ENCODE measurements at regions of chr19 and their contacts with region 1.

Region 1: DNA sequence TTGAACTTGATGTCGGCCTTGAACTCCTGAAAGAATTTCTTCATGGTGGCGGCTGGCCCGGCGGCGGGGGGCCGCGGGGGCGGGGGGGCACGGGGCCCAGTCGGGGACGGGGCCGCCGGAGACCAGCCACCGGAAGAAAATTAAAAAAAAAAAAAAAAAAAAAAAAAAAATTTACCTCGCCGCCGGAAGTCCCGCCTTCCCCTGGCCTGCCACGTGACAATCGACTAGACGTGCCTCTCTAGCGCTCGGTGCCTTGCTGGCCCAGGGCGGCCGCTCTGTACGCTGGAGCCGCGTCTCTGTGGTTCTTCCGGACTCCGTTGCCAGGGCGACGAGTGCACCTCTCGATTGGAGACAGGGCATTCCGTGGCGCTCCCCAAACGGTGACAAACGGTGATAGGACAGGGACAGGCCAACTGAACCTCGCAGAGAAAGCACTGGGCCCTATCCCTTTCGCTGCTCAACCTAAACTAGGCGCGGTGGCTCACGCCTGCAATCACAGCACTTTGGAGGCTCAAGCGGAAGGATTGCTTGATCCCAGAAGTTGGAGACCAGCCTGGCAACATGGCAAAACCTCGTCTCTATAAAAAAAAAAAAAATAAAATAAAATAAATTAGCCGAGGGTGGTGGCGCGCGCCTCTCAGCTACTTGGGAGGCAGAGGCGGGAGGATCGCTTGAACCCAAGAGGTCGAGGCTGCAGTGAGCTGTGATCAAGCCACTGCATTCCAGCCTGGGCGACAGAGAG is at the start of gene UBXN6:
- DNase-seq: peak; percentile 99
- H3K4me3 ChIP-seq: peak within 1 kb of the TSS; percentile 82 to 87
- H3K27ac ChIP-seq: peak within 1 kb of the TSS; percentile 86 to 92
- H3K4me1 ChIP-seq: peaks cover 31% of the 10 kb centered on the region
- H3K27me3 ChIP-seq: no peaks in the 10 kb centered on the region
- CTCF ChIP-seq: peak in 1 of 3 experiments; percentile 24
- POLR2A ChIP-seq: no peak
- total RNA-seq, gene UBXN6: 293 to 319 TPM

Region 2: DNA sequence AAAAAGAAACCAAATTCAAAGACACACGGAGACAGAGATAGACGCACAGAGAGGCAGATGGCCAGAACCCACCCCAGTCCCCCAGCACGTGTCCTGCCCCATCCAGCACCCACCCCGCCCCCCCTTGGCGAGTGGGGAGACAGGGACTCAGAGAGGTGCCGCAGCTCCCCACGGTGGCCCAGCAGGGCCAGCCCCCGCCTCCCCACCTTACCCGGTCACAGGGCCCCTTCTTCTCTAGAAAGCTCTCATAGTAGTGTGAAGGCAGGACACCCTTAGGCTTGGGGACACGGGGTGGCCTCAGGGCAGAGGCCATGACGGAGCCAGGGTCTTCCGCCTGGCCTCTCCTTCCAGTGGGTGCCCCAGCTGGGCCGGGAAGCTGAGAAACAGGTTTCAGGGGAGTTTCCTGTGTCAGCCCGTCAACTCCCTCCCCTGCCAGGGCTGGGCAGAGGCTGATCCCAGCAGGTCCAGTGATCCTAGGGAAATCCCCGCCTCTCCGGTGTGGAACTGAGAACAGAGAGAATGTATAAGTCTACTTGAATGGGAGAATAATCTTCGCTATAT is 119.3 kb before region 1 on chr19 and contains the start of gene STAP2:
- intact Hi-C with region 1: no loop called
- DNase-seq: peak; percentile 51
- H3K4me3 ChIP-seq: peak within 1 kb of the TSS; percentile 32 to 43
- H3K27ac ChIP-seq: peak within 1 kb of the TSS; percentile 45 to 48
- H3K4me1 ChIP-seq: peaks cover 7% of the 10 kb centered on the region
- H3K27me3 ChIP-seq: no peaks in the 10 kb centered on the region
- CTCF ChIP-seq: no peak
- POLR2A ChIP-seq: no peak
- total RNA-seq, gene STAP2: 5.3 to 6.4 TPM

Region 3: DNA sequence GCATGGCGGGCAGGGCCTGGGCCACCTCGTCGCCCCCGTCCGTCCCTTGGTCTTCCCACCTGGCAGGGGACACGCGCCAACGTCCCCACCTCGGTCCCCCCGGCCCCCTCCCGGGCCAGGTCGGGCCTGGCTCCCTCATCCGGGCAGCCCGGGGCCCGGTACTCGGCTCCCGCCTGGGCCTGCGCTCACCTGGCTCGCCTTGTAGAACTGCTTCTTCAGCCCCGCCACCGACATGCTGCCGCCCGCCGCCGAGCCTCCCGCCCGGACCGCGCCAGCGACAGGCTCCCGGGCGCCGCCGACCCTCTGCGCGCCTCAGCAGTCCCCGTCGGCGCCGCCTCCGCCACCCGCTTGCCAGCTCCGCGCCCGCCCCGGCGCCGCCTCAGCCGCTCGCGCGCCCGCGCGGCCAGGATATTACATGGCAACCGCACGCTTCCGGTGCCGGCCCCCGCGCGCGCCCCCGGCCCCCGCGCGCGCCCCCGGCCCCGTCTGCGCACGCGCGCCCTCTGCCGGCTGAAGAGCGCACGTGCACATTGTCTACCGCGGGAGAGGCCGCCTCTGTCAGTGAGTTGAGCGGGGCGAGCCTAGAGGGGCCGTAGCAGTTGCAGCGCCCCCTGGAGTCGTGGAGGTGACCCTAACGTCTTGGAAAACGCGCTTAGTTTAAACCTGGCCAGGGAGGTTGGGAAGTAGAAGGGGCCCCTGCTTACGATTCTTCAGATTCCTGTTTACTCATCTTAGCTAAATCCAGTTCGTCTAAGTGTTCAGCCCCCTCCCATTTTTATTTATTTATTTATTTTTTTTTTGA is 57.5 kb before region 1 on chr19 and contains the start of gene SH3GL1:
- intact Hi-C with region 1: loop called (anchors 10 kb)
- DNase-seq: peak; percentile 96
- H3K4me3 ChIP-seq: peak within 1 kb of the TSS; percentile 88 to 97
- H3K27ac ChIP-seq: peak within 1 kb of the TSS; percentile 88 to 93
- H3K4me1 ChIP-seq: peaks cover 32% of the 10 kb centered on the region
- H3K27me3 ChIP-seq: no peaks in the 10 kb centered on the region
- CTCF ChIP-seq: peak; percentile 89 to 99 (median 98)
- POLR2A ChIP-seq: no peak
- total RNA-seq, gene SH3GL1: 41.6 to 53.4 TPM

Region 4: DNA sequence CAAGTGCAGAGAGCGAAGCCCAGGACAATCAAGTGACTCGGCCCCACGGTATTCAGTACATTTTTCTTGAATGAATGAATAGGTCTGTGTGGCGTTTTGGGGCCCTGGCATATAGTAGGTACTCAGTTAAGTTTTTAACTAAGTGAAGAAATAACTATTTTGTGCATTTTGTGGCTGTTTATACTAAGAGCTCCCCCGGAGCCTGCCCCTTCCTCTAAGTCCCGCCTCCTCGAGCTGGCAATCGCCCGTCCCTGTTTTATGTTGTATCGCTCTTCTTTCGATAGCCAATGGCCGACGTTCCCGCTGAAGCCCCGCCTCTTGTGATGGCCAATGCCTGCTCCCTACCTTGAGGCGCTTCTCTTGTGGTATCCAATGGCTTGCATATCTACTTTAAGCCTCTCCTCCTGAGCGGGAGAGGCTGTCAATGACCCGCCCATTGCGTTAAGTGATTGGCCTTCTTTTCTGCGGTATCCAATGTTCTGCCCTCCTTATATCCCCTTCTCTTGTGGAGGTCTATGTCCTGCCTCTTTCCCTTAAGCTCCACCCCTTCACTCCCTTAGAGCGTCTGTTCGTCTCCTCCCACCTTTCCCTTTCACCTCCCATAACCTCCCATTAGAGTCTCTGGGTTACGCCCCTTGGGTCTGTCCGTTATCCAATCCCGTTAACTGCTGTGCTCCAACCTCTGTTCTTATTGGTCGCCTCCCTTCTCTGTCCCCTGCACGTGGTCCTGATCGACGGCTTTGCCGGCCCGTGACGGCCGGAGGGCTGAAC is 13.8 kb after region 1 on chr19:
- intact Hi-C with region 1: loop called (anchors 2 kb)
- DNase-seq: peak; percentile 99
- H3K4me3 ChIP-seq: peak overlapping the region; percentile 88 to 91
- H3K27ac ChIP-seq: peak overlapping the region; percentile 53 to 80
- H3K4me1 ChIP-seq: peaks cover 21% of the 10 kb centered on the region
- H3K27me3 ChIP-seq: no peaks in the 10 kb centered on the region
- CTCF ChIP-seq: peak in 1 of 3 experiments; percentile 5
- POLR2A ChIP-seq: peak; percentile 26